ENCODE measurements at regions of chr11 and their contacts with region 1.

Region 1: GRCh38 chr11:119018074-119018938 is at the starts of genes RPS25 and TRAPPC4:
- DNase-seq: peak; percentile 87 to 98 (median 96)
- ATAC-seq: peak; percentile 93
- H3K4me3 ChIP-seq: peak within 1 kb of the TSS; percentile 89
- H3K4me3 Mint-ChIP-seq: peak within 1 kb of the TSS; percentile 96 to 100 (median 98)
- H3K27ac ChIP-seq: peak within 1 kb of the TSS; percentile 98
- H3K27ac Mint-ChIP-seq: peak within 1 kb of the TSS; percentile 99 to 100 (median 100)
- H3K4me1 ChIP-seq: peaks cover 30 to 32% of the 10 kb centered on the region in 2 donors
- H3K4me1 Mint-ChIP-seq: peaks cover 21 to 75% (median 50%) of the 10 kb centered on the region in 7 donors
- H3K27me3 ChIP-seq: no peaks in the 10 kb centered on the region
- H3K27me3 Mint-ChIP-seq: no peaks in the 10 kb centered on the region
- total RNA-seq, gene RPS25: 1,535 to 3,042 (median 2,772) TPM
- total RNA-seq, gene TRAPPC4: 70.7 to 80.3 (median 77.8) TPM

Region 2: DNA sequence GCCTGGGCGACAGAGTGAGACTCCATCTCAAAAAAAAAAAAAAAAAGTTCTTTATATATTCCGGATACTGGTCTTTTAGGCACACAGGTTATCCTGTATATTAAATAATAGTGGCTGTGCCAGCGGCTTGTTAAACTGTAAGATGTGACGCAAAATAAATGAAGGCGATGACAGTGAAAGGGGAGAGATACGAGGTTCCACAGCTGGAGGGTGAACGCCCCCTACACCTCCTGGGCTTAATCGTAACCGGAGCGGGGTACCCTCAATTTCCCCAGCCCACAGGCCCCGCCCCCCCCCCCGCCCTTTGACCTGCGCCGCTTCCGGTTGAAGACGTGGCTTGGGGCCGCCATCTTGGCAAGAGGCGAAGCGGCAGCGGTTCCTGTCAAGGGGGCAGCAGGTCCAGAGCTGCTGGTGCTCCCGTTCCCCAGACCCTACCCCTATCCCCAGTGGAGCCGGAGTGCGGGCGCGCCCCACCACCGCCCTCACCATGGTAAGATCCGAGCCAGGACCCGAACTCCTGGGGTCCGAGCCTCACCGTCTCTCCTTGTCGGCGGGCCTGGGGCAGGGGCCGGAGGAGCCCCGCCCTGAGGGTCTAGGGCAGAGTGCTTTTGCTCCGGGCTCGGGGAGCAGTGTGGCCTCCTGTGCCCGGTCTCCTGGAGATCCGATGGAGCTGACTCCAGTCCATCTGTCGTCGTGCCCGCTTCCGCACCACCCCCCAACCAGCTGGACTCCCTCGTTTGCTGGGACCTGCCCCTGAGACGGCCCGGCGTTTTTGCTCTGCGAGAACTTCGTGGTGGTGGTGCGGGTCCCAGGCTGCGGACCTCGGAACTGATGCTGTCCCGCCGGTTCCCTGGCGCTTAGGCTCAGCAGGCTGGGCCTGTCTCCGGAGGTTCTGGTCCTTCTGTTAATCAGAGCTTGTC is 446.0 kb before region 1 on chr11 and contains the start of gene ARCN1:
- CTCF ChIA-PET with region 1: no interaction called
- POLR2A ChIA-PET with region 1: interaction called, 3 read pairs
- intact Hi-C with region 1: loop called (anchors 1 to 5 kb)
- DNase-seq: peak; percentile 58 to 82 (median 79)
- ATAC-seq: peak; percentile 94
- H3K4me3 ChIP-seq: peak within 1 kb of the TSS; percentile 98
- H3K4me3 Mint-ChIP-seq: peak within 1 kb of the TSS; percentile 83 to 99 (median 96)
- H3K27ac ChIP-seq: peak within 1 kb of the TSS; percentile 100
- H3K27ac Mint-ChIP-seq: peak within 1 kb of the TSS; percentile 92 to 98 (median 98)
- H3K4me1 ChIP-seq: peaks cover 26 to 36% of the 10 kb centered on the region in 2 donors
- H3K4me1 Mint-ChIP-seq: peaks cover 35 to 58% (median 50%) of the 10 kb centered on the region in 7 donors
- H3K27me3 ChIP-seq: no peaks in the 10 kb centered on the region
- H3K27me3 Mint-ChIP-seq: no peaks in the 10 kb centered on the region
- total RNA-seq, gene ARCN1: 71.2 to 134 (median 115) TPM

Region 3: DNA sequence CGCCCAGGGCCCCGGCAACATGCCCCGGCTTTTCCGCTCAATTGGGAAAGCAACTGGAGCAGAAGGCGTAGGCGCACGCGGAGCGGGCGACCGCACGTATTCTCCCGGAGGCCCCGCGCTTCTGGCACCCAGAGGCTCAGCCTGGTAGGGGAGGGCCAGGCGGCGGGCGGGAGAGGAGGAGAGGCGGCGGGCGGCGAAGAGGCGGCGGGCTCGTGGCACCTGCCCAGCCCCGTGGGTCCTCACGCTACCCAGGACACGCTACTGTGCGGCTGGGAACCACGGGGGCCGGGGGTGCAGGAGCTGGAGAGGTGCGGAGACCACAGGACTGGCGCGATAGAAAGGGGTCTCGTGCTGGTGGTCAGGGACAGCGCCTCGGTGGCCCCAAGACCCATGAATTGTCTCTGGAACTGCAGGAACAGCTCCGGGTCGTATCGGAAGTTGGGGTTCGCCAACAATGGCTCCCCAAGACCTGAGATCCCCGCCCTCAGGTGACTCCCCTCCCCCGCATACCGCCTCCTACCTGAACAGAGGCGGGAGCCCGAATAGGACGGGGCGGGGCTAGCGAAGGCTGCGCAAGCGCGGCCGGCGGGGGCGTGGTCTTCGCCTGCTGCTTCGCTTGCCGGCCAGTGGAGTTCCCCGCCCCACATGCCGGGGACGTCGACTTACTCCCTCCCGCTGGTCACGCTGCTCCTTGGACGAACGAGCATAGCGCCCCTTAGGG is 12.2 kb after region 1 on chr11 and contains the start of gene SLC37A4:
- CTCF ChIA-PET with region 1: interaction called, 5 read pairs
- POLR2A ChIA-PET with region 1: interaction called, 67 read pairs
- intact Hi-C with region 1: loop called (anchors 1 kb)
- DNase-seq: peak; percentile 96 to 100 (median 98)
- ATAC-seq: peak; percentile 97
- H3K4me3 ChIP-seq: peak within 1 kb of the TSS; percentile 91
- H3K4me3 Mint-ChIP-seq: peak within 1 kb of the TSS; percentile 62 to 93 (median 82)
- H3K27ac ChIP-seq: peak within 1 kb of the TSS; percentile 79
- H3K27ac Mint-ChIP-seq: peak within 1 kb of the TSS; percentile 59 to 93 (median 81)
- H3K4me1 ChIP-seq: peaks cover 0 to 10% of the 10 kb centered on the region in 2 donors
- H3K4me1 Mint-ChIP-seq: peaks cover 12 to 24% (median 17%) of the 10 kb centered on the region in 7 donors
- H3K27me3 ChIP-seq: no peaks in the 10 kb centered on the region
- H3K27me3 Mint-ChIP-seq: no peaks in the 10 kb centered on the region
- total RNA-seq, gene SLC37A4: 7.1 to 20.8 (median 14.6) TPM

Region 4: GRCh38 chr11:119084663-119085436 is 66.5 kb after region 1 on chr11 and contains the start of gene HMBS:
- CTCF ChIA-PET with region 1: no interaction called
- POLR2A ChIA-PET with region 1: interaction called, 4 read pairs
- intact Hi-C with region 1: loop called in 1 of 2 experiments (anchors 2 kb)
- DNase-seq: peak; percentile 83 to 93 (median 87)
- ATAC-seq: peak; percentile 97
- H3K4me3 ChIP-seq: peak within 1 kb of the TSS; percentile 81
- H3K4me3 Mint-ChIP-seq: peak within 1 kb of the TSS; percentile 85 to 98 (median 94)
- H3K27ac ChIP-seq: peak within 1 kb of the TSS; percentile 81
- H3K27ac Mint-ChIP-seq: peak within 1 kb of the TSS; percentile 87 to 97 (median 93)
- H3K4me1 ChIP-seq: peaks cover 8 to 9% of the 10 kb centered on the region in 2 donors
- H3K4me1 Mint-ChIP-seq: peaks cover 7 to 39% (median 17%) of the 10 kb centered on the region in 7 donors
- H3K27me3 ChIP-seq: no peaks in the 10 kb centered on the region
- H3K27me3 Mint-ChIP-seq: no peaks in the 10 kb centered on the region
- total RNA-seq, gene HMBS: 6.7 to 25.4 (median 7.7) TPM

Region 5: GRCh38 chr11:119168471-119169281 is 150.4 kb after region 1 on chr11 and contains the start of gene NLRX1:
- CTCF ChIA-PET with region 1: no interaction called
- POLR2A ChIA-PET with region 1: interaction called, 4 read pairs
- intact Hi-C with region 1: loop called in 1 of 2 experiments (anchors 5 kb)
- DNase-seq: peak; percentile 67 to 85 (median 82)
- ATAC-seq: peak; percentile 98
- H3K4me3 ChIP-seq: peak within 1 kb of the TSS; percentile 75
- H3K4me3 Mint-ChIP-seq: peak within 1 kb of the TSS; percentile 86 to 94 (median 90)
- H3K27ac ChIP-seq: peak within 1 kb of the TSS; percentile 73
- H3K27ac Mint-ChIP-seq: peak within 1 kb of the TSS; percentile 64 to 95 (median 87)
- H3K4me1 ChIP-seq: peaks cover 0 to 4% of the 10 kb centered on the region in 2 donors
- H3K4me1 Mint-ChIP-seq: peaks cover 4 to 25% (median 11%) of the 10 kb centered on the region in 7 donors
- H3K27me3 ChIP-seq: no peaks in the 10 kb centered on the region
- H3K27me3 Mint-ChIP-seq: no peaks in the 10 kb centered on the region
- total RNA-seq, gene NLRX1: 8.3 to 19.5 (median 9.8) TPM

Measured in naive thymus-derived CD4-positive, alpha-beta T cell (primary cell).